ENCODE measurements at regions of chr5 and their contacts with region 1.

Region 1: DNA sequence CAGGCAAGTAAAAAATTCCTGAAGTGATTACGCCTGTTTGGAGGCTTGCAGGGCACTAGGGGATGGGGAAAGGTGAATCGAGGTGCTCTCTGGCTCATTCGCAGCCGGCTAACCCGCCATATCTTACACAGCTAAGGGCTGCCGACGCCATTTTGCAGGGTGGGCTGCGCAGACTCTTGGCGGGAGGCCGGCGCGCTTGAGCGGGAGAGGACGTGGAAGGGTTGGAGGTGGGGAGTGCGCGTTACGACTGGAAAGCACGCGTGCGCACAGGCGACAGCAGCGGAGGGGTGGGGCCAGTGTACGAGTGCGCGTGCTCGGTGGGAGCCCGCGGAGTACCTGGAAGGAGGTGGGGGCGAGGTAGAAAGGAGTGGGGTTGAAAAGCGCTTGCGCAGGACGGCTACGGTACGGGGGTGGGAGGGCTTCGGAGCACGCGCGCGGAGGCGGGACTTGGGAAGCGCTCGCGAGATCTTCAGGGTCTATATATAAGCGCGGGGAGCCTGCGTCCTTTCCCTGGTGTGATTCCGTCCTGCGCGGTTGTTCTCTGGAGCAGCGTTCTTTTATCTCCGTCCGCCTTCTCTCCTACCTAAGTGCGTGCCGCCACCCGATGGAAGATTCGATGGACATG is at the start of gene NPM1:
- DNase-seq: peak; percentile 99
- H3K4me3 Mint-ChIP-seq: peak within 1 kb of the TSS; percentile 94
- H3K27ac Mint-ChIP-seq: peak within 1 kb of the TSS; percentile 100
- H3K4me1 Mint-ChIP-seq: peaks cover 41% of the 10 kb centered on the region
- H3K27me3 Mint-ChIP-seq: peaks cover 10% of the 10 kb centered on the region
- total RNA-seq, gene NPM1: 3,066 and 3,162 TPM in 2 replicates

Region 2: DNA sequence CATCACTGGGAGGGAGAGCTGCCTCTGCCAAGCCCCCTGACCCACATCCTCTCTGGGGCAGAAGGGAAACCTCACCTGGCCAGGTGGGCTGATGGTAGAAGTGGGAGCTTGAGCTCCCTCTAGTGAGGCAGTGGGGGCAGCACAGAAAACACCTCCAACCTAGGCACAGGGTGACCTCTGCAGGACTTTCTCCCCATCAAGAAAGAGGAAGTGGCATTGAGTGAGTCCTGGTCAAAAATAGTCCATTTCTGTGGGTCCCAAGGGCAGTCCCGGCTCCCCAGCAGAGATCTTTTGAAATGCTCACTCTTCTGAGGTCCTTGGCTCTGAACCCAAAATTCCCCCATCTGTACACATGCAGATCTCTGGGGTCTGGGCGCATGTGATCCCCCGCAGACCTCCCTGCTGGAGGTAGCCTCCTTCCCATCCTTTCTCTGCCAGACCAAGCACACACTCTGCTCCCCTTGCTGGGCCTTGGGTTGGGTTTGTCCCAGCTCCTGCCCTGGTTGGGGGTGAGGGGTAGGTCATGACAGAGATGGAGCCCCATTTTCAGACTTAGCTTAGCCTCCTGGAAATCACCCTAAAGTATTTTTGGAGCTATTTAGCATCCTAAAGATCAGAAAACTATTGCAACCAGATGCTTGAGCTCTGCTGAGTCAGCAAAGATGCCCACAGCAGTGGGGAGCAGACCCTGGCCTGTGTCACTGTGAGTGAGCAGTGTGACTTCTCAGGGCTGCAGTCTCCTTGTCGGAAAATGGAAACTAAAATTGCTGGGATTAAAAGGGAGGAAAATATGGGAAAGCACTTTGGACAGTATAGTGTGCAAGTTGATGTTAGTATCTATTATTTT is 1048.3 kb before region 1 on chr5:
- intact Hi-C with region 1: loop called (anchors 10 kb)
- DNase-seq: peak; percentile 88
- H3K4me3 Mint-ChIP-seq: no peak overlapping the region
- H3K27ac Mint-ChIP-seq: peak overlapping the region; percentile 55
- H3K4me1 Mint-ChIP-seq: peaks cover 39% of the 10 kb centered on the region
- H3K27me3 Mint-ChIP-seq: no peaks in the 10 kb centered on the region

Region 3: GRCh38 chr5:171269717-171270116 is 117.7 kb before region 1 on chr5:
- intact Hi-C with region 1: no loop called
- DNase-seq: no peak
- H3K4me3 Mint-ChIP-seq: no peak overlapping the region
- H3K27ac Mint-ChIP-seq: no peak overlapping the region
- H3K4me1 Mint-ChIP-seq: peaks cover 3% of the 10 kb centered on the region
- H3K27me3 Mint-ChIP-seq: peaks cover 13% of the 10 kb centered on the region

Region 4: GRCh38 chr5:171927345-171927941 is 540.0 kb after region 1 on chr5:
- intact Hi-C with region 1: no loop called
- DNase-seq: no peak
- H3K4me3 Mint-ChIP-seq: no peak overlapping the region
- H3K27ac Mint-ChIP-seq: no peak overlapping the region
- H3K4me1 Mint-ChIP-seq: peaks cover 18% of the 10 kb centered on the region
- H3K27me3 Mint-ChIP-seq: no peaks in the 10 kb centered on the region